ENCODE measurements at regions of chr15 and their contacts with region 1.

Region 1: DNA sequence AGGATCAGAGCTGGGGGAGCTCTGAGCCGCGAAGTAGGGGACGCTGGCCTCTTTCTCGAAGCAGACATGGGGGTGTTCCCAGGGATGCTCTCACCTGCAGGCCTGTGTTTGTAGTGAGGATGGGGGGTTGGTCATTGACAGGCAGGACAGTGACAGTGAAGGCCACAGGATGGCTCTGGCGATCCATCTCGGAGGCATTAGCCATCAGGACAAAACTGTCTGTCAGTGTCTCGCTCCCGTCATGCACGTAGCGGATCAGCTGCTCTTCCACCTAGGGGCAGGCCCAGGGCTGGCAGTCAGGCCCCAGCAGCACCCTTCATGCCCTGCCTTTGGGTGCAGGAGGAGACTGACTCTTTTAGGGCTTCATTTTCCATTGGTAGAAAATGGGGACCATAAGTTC is 28.0 kb downstream of the CSPG4 start:
- DNase-seq: peak in 1 of 6 donors; percentile 46
- ATAC-seq: no peak
- H3K4me3 ChIP-seq: no peak overlapping the region
- H3K27ac ChIP-seq: no peak overlapping the region
- H3K4me1 ChIP-seq: no peaks in the 10 kb centered on the region
- H3K27me3 ChIP-seq: no peaks in the 10 kb centered on the region
- CTCF ChIP-seq: no peak

Region 2: DNA sequence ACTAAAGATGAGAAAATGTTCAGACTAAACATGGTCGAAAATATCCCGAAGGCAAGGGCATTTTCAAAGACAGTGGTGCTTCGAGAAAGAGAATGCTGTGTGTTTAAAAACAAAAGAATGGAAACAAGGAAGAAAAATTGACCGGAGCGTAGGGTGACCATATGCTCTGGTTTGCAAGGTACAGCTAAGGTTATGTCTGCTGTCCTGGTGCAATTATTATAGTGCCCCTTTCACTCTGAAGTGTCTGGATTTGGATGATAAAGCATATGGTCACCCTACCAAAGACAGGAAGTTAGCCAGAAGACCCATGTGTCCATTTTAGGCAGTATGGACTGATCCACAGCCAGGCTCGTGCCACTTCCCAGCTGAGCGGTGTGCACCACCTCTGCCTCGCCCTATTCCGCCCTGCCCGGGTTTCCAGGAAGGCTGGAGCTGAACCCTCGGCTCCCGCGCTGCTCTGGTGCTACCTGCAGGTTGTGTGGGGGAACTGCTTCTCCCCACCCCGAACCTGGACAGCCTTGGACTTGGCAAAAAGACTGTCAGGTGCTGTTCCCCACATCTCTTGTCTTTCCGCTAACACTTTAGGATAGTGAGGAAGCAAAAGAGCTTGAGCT is 376.8 kb before region 1 on chr15:
- intact Hi-C with region 1: no loop called
- DNase-seq: peak; percentile 57 to 88 (median 74)
- ATAC-seq: peak; percentile 98 to 100 (median 100)
- H3K4me3 ChIP-seq: no peak overlapping the region
- H3K27ac ChIP-seq: no peak overlapping the region
- H3K4me1 ChIP-seq: no peaks in the 10 kb centered on the region
- H3K27me3 ChIP-seq: no peaks in the 10 kb centered on the region
- CTCF ChIP-seq: peak; percentile 20 to 52 (median 47)

Region 3: GRCh38 chr15:75367913-75368688 is 316.5 kb before region 1 on chr15 and contains the start of gene MAN2C1:
- intact Hi-C with region 1: loop called in 2 of 3 experiments (anchors 5 to 10 kb)
- DNase-seq: peak; percentile 97 to 99 (median 97)
- ATAC-seq: peak; percentile 94 to 97 (median 94)
- H3K4me3 ChIP-seq: peak within 1 kb of the TSS; percentile 51 to 82 (median 78)
- H3K27ac ChIP-seq: peak within 1 kb of the TSS; percentile 90 to 99 (median 94)
- H3K4me1 ChIP-seq: peaks cover 6 to 17% (median 10%) of the 10 kb centered on the region in 3 donors
- H3K27me3 ChIP-seq: no peaks in the 10 kb centered on the region
- CTCF ChIP-seq: peak; percentile 33 to 61 (median 46)
- total RNA-seq, gene MAN2C1: 63.7 to 115 (median 91.1) TPM

Region 4: DNA sequence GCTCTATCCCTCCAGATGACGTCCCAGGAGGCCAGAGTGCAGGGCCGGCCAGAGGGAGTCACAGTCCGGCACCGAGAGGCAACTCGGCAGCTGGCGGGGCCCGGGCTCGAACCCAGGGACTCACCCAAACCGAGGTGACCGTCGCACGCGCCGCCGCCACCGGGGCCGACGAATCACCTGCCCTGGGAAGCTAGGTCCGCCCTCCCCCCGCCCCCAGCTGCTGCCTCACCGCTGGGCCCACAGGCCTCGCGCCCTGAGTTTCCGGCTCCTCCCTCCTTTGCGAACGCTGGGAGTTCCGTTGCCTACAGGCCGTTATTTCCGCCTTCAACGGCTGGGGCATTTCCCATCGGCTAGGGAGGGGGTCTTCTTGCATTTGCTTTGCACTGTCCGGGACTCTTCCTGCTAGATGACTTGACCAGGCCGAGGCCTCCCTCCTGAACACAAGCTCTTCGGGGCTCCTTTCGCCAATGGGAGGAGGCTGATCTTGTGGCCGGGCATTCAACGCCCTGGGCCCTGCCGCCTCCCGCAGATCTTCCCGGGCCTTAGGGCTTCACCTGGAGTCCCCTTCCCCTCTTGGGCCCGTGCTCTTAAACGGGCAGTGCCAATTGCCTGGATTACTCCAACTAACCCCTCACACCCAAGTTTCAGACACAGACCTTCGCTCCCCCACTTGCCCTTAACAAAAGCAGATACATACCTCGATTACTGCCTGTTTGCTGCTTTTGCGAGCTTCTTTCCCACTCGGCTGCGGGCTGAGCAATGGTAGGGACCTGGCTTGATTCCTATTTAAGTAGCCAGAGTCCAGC is 58.9 kb before region 1 on chr15 and contains the start of gene SNUPN:
- intact Hi-C with region 1: loop called in 2 of 3 experiments (anchors 10 kb)
- DNase-seq: peak; percentile 93 to 98 (median 95)
- ATAC-seq: peak; percentile 92 to 97 (median 96)
- H3K4me3 ChIP-seq: peak within 1 kb of the TSS; percentile 67 to 93 (median 89)
- H3K27ac ChIP-seq: peak within 1 kb of the TSS; percentile 78 to 96 (median 92)
- H3K4me1 ChIP-seq: peaks cover 0 to 9% (median 3%) of the 10 kb centered on the region in 3 donors
- H3K27me3 ChIP-seq: no peaks in the 10 kb centered on the region
- CTCF ChIP-seq: no peak
- total RNA-seq, gene SNUPN: 5.1 to 11.3 (median 6.4) TPM

Region 5: DNA sequence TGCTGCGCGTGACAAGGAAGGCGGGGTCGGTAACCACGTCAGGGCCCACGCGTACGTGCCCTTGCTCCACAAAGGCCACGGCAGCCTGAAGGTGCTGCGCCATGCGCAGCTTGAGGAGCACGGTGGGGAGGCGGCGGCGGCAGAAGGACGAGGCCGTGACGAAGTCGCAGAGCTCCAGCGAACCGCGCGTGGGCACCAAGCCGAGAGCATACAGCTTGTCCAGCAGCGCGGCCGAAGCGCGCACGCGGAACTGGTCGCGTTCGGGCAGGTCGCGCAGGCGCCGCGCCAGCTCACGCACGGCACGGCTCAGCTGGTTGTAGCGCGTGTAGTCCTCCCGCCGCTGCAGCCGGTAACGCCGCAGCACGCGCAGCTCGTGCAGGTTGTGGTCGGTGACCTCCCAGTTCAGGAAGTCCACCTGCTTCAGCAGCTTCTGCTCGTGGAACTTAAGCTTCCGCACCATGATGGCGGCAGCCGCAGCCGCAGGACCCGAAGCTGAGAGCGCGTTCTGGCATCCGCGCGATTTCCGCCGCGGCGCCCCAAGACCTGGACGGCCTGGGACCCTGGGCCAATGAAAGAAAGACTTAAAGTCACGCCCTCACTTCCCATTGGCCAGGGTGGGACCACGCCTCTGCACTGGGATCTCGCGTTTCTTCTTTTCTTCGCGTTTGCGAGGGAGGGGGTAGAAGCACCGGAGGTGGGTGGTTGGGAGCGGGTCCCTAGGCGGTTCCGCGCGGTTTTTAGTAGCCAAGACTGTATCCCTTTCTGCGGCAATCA is 44.7 kb before region 1 on chr15 and contains the start of gene IMP3:
- intact Hi-C with region 1: loop called in 1 of 3 experiments (anchors 10 kb)
- DNase-seq: peak; percentile 92 to 96 (median 95)
- ATAC-seq: peak; percentile 93 to 96 (median 94)
- H3K4me3 ChIP-seq: peak within 1 kb of the TSS; percentile 87 to 96 (median 90)
- H3K27ac ChIP-seq: peak within 1 kb of the TSS; percentile 90 to 96 (median 93)
- H3K4me1 ChIP-seq: peaks cover 5 to 23% (median 11%) of the 10 kb centered on the region in 3 donors
- H3K27me3 ChIP-seq: no peaks in the 10 kb centered on the region
- CTCF ChIP-seq: no peak
- total RNA-seq, gene IMP3: 18.7 to 34.8 (median 29.2) TPM